ENCODE measurements at regions of chr1 and their contacts with region 1.

Region 1: DNA sequence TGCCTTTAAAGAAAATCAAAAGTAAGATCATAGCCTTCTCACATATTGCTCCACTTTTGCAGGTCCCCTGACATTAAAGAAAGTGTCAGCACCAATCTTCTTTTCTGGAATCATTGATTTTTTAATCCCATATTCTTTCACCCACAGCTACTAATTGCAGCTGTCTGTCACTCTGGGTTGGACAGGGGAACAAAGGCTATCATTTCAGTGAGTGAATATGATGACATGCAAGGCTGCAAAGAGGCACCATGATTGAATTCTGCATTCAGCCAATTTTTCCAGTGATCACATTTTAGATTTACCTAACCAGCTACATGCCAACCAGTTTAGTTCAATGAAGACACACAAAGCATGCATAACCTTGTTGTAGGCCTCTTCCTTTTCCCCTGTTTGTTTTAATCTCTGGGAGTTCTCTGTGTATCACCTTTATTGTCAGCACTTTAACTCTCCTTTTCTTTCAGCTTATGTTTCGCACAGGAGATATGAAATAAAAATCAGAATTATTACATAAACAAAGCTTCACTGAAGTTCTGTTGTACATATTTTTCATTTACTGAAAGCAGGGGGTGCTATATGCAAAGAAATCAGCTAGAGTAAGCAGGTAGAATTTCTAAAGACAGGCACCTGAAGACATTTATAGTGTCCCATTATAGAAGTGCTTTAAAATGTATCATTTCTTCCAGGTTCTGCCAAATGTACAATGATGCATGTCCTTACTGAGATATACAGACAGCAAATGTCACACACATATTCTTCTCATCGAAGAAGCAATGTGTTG is 584.8 kb downstream of the PLA2G4A start:
- DNase-seq: no peak
- H3K4me3 Mint-ChIP-seq: no peak overlapping the region
- H3K27ac Mint-ChIP-seq: no peak overlapping the region
- H3K4me1 Mint-ChIP-seq: peaks cover 7% of the 10 kb centered on the region
- H3K27me3 Mint-ChIP-seq: no peaks in the 10 kb centered on the region
- CTCF ChIP-seq: peak; percentile 26

Region 2: GRCh38 chr1:186849271-186849671 is 564.3 kb before region 1 on chr1:
- CTCF ChIA-PET with region 1: no interaction called
- intact Hi-C with region 1: no loop called
- DNase-seq: peak; percentile 73
- H3K4me3 Mint-ChIP-seq: peak overlapping the region; percentile 37
- H3K27ac Mint-ChIP-seq: peak overlapping the region; percentile 88
- H3K4me1 Mint-ChIP-seq: peaks cover 39% of the 10 kb centered on the region
- H3K27me3 Mint-ChIP-seq: no peaks in the 10 kb centered on the region
- CTCF ChIP-seq: no peak

Region 3: GRCh38 chr1:187051618-187052232 is 361.9 kb before region 1 on chr1:
- CTCF ChIA-PET with region 1: no interaction called
- intact Hi-C with region 1: loop called (anchors 5 kb)
- DNase-seq: peak; percentile 61
- H3K4me3 Mint-ChIP-seq: no peak overlapping the region
- H3K27ac Mint-ChIP-seq: no peak overlapping the region
- H3K4me1 Mint-ChIP-seq: peaks cover 13% of the 10 kb centered on the region
- H3K27me3 Mint-ChIP-seq: no peaks in the 10 kb centered on the region
- CTCF ChIP-seq: peak; percentile 40

Region 4: DNA sequence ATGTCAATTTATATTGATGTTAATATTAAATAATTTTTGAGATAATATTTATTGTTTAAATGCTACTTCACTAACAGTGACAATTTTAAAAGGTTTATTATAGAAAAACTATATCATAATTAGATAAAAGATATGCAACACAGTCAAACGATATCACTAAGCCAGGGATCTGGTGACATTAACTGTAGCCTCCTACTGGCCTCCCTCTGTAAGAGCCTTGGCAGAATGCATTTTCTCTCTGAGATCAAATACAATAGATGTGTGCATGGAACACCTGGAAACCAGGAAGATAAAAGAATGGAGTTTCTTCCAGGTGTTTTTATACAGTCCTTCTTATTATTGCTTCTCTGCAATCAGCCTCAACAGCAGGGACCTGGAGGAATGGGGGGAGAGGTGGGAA is 1302.0 kb after region 1 on chr1:
- CTCF ChIA-PET with region 1: no interaction called
- intact Hi-C with region 1: loop called (anchors 10 kb)
- DNase-seq: peak; percentile 10
- H3K4me3 Mint-ChIP-seq: no peak overlapping the region
- H3K27ac Mint-ChIP-seq: no peak overlapping the region
- H3K4me1 Mint-ChIP-seq: peaks cover 8% of the 10 kb centered on the region
- H3K27me3 Mint-ChIP-seq: no peaks in the 10 kb centered on the region
- CTCF ChIP-seq: peak; percentile 46

Region 5: GRCh38 chr1:188937965-188938551 is 1524.5 kb after region 1 on chr1:
- CTCF ChIA-PET with region 1: no interaction called
- intact Hi-C with region 1: loop called (anchors 10 kb)
- DNase-seq: peak; percentile 30
- H3K4me3 Mint-ChIP-seq: no peak overlapping the region
- H3K27ac Mint-ChIP-seq: no peak overlapping the region
- H3K4me1 Mint-ChIP-seq: no peaks in the 10 kb centered on the region
- H3K27me3 Mint-ChIP-seq: no peaks in the 10 kb centered on the region
- CTCF ChIP-seq: peak; percentile 65